Activated T-helper 1 cell treated with anti-CD3 and anti-CD28 coated beads, Interleukin-12 subunit alpha, Interleukin-12 subunit beta, Interleukin-2, Interleukin-4 antibody, amounts not matched to agents 30 ng/mL and 10 ng/mL and 1 ng/mL, durations not matched to agents 14 hours and 24 hours and 36 hours (primary cell): ENCODE measurements at regions of chr2 and their contacts with region 1.

Region 1: GRCh38 chr2:46421361-46421760 is 58.0 kb upstream of the TMEM247 start:
- DNase-seq: no peak
- H3K4me3 Mint-ChIP-seq: no peak overlapping the region
- H3K27ac Mint-ChIP-seq: no peak overlapping the region
- H3K4me1 Mint-ChIP-seq: no peaks in the 10 kb centered on the region
- H3K27me3 Mint-ChIP-seq: peaks cover 4% of the 10 kb centered on the region

Region 2: GRCh38 chr2:46394649-46395510 is 26.5 kb before region 1 on chr2:
- intact Hi-C with region 1: loop called (anchors 1 kb)
- DNase-seq: no peak
- H3K4me3 Mint-ChIP-seq: no peak overlapping the region
- H3K27ac Mint-ChIP-seq: peak overlapping the region; percentile 56
- H3K4me1 Mint-ChIP-seq: peaks cover 20% of the 10 kb centered on the region
- H3K27me3 Mint-ChIP-seq: peaks cover 20% of the 10 kb centered on the region

Region 3: GRCh38 chr2:46439582-46439981 is 18.2 kb after region 1 on chr2:
- intact Hi-C with region 1: no loop called
- DNase-seq: no peak
- H3K4me3 Mint-ChIP-seq: no peak overlapping the region
- H3K27ac Mint-ChIP-seq: no peak overlapping the region
- H3K4me1 Mint-ChIP-seq: peaks cover 17% of the 10 kb centered on the region
- H3K27me3 Mint-ChIP-seq: peaks cover 4% of the 10 kb centered on the region

Region 4: DNA sequence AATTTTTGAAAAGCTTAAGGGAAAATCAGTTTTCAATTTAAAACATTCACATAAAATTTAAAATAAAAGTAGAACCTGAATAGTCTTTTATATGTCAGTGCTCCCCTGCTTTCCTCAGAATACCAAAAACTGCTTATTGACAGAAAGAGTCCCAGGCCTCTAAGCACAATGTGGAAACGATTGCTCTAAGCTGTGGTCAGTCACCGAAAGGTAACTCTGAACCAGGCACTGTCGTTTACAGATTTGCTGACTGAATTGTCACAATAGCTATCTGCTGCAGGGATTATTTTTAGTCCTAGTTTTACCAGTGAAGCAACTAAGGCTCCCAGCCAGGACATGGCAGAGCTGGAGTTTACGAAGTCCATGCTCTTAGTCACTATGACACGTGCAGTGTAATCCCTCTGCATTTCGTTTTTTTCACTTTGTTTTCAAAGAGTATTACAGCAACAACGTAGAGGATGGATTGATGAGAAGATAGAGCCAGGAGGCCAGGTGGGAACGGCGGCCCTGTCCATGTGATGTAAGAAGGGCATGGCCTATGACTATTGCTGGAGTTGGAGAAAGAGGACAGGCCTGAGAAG is 29.9 kb after region 1 on chr2:
- intact Hi-C with region 1: no loop called
- DNase-seq: no peak
- H3K4me3 Mint-ChIP-seq: no peak overlapping the region
- H3K27ac Mint-ChIP-seq: no peak overlapping the region
- H3K4me1 Mint-ChIP-seq: no peaks in the 10 kb centered on the region
- H3K27me3 Mint-ChIP-seq: peaks cover 29% of the 10 kb centered on the region